ENCODE measurements at regions of chr10 and their contacts with region 1.

Region 1: GRCh38 chr10:99964791-99965190 is 45.0 kb downstream of the DNMBP start:
- DNase-seq: no peak
- H3K4me3 Mint-ChIP-seq: no peak overlapping the region
- H3K27ac Mint-ChIP-seq: no peak overlapping the region
- H3K4me1 Mint-ChIP-seq: peaks cover 10% of the 10 kb centered on the region
- H3K27me3 Mint-ChIP-seq: no peaks in the 10 kb centered on the region
- CTCF ChIP-seq: no peak

Region 2: GRCh38 chr10:99906470-99906869 is 58.3 kb before region 1 on chr10:
- CTCF ChIA-PET with region 1: interaction called, 4 read pairs
- intact Hi-C with region 1: loop called (anchors 2 kb)
- DNase-seq: peak; percentile 67
- H3K4me3 Mint-ChIP-seq: no peak overlapping the region
- H3K27ac Mint-ChIP-seq: peak overlapping the region; percentile 64
- H3K4me1 Mint-ChIP-seq: peaks cover 26% of the 10 kb centered on the region
- H3K27me3 Mint-ChIP-seq: no peaks in the 10 kb centered on the region
- CTCF ChIP-seq: no peak

Region 3: GRCh38 chr10:99921948-99922347 is 42.8 kb before region 1 on chr10:
- CTCF ChIA-PET with region 1: no interaction called
- intact Hi-C with region 1: loop called (anchors 2 kb)
- DNase-seq: no peak
- H3K4me3 Mint-ChIP-seq: peak overlapping the region; percentile 30
- H3K27ac Mint-ChIP-seq: no peak overlapping the region
- H3K4me1 Mint-ChIP-seq: peaks cover 61% of the 10 kb centered on the region
- H3K27me3 Mint-ChIP-seq: no peaks in the 10 kb centered on the region
- CTCF ChIP-seq: no peak

Region 4: GRCh38 chr10:99926925-99927720 is 37.7 kb before region 1 on chr10:
- CTCF ChIA-PET with region 1: no interaction called
- intact Hi-C with region 1: loop called (anchors 2 kb)
- DNase-seq: peak; percentile 46
- H3K4me3 Mint-ChIP-seq: peak overlapping the region; percentile 100
- H3K27ac Mint-ChIP-seq: peak overlapping the region; percentile 87
- H3K4me1 Mint-ChIP-seq: peaks cover 48% of the 10 kb centered on the region
- H3K27me3 Mint-ChIP-seq: no peaks in the 10 kb centered on the region
- CTCF ChIP-seq: no peak